ENCODE measurements at regions of chr15 and their contacts with region 1.

Region 1: GRCh38 chr15:84600851-84601838 is at the start of gene ZSCAN2:
- DNase-seq: peak; percentile 88 to 94 (median 91)
- ATAC-seq: peak; percentile 95 to 96
- H3K4me3 Mint-ChIP-seq: peak within 1 kb of the TSS; percentile 92 to 99 (median 98)
- H3K27ac Mint-ChIP-seq: peak within 1 kb of the TSS; percentile 84 to 97 (median 94)
- H3K4me1 Mint-ChIP-seq: peaks cover 32 to 79% (median 74%) of the 10 kb centered on the region in 4 donors
- H3K27me3 Mint-ChIP-seq: no peaks in the 10 kb centered on the region
- polyA plus RNA-seq, gene ZSCAN2: 5.1 to 10.1 (median 7.4) TPM

Region 2: DNA sequence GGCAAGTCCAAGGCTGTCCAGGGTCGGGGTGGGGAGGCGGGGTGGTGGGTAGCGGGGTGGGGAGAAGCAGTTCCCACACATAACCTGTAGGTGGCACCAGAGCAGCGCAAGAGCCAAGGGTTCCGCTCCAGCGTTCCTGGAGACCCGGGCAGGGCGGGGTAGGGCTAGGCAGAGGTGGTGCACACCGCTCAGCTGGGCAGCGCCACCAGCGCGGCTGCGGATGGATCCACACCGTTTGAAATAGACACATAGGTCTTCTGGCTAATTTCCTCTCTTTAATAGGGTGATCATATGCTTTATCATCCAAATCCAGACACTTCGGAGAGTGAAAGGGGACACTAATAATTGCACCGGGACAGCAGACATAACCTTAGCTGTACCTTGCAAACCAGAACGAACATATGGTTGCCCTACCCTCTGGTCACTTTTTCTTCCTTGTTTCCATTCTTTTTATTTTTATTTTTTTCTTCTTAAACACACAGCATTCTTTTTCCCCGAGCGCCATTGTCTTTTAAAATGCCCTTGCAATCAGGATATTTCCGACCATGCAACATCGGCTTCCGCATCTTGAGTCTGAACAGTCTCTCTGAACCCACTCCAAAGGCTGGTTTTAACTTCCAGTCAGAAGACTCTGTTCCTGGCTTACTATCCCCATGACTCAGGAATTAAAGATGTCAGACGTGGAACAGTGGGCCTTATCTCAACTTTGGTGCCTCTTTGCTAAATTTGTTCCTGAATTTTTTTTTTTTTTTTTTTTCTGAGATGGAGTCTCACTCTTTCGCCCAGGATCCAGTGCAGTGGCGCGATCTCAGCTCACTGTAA is 12.9 kb before region 1 on chr15:
- POLR2A ChIA-PET with region 1: interaction called, 11 read pairs
- DNase-seq: peak; percentile 69 to 90 (median 82)
- ATAC-seq: peak; percentile 100
- H3K4me3 Mint-ChIP-seq: peak overlapping the region; percentile 31 to 74 (median 55)
- H3K27ac Mint-ChIP-seq: peak overlapping the region in 1 of 10 donors; percentile 24
- H3K4me1 Mint-ChIP-seq: peaks cover 2 to 7% (median 5%) of the 10 kb centered on the region in 4 donors
- H3K27me3 Mint-ChIP-seq: peaks cover 0 to 7% (median 2%) of the 10 kb centered on the region in 5 donors

Region 3: DNA sequence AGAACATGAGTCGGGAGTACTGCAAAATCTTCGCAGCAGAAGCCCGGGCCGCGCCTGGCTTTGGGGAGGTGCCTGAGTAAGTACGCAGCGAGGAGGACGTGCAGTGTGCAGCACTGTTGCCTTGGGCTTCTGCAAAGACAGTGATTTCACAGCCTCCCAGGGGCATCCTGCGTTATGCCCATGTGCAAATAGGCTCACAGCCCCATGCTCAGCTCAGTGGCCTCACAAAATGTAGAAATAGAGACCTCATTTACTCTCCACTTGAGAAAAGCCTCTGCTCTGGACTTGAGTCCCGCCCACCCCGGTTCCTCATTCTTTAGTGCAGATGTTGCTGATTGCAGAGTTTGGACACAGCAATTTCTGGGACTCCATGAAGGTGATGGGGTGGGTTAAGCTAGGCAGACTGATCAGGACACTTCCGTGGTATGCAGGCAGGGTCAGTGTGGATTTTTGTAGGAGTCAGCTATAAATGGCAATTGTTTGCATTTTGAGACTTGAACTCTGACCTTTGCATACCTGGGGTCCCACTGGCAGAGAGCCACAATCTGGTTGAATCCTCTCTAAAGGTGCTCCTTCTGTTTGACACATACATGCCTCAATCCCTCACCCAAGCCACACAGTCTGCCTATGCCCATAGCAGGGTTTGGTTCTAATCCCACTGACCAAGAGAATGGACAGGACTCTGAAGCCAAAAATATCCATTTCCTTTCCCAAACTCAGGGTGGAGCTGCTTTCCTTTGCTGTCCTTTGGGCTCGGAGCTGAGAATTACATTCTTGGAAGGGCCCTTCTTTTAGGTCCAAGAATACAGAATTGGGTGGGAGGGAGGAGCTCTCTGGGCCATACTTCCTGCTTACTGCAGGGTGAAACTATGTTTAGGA is 262.7 kb after region 1 on chr15:
- POLR2A ChIA-PET with region 1: no interaction called
- DNase-seq: no peak
- ATAC-seq: no peak
- H3K4me3 Mint-ChIP-seq: no peak overlapping the region
- H3K27ac Mint-ChIP-seq: peak overlapping the region in 1 of 10 donors; percentile 29
- H3K4me1 Mint-ChIP-seq: no peaks in the 10 kb centered on the region
- H3K27me3 Mint-ChIP-seq: no peaks in the 10 kb centered on the region